Gastrocnemius medialis (tissue), 4 donors: ENCODE measurements at regions of chr20 and their contacts with region 1.

Region 1: DNA sequence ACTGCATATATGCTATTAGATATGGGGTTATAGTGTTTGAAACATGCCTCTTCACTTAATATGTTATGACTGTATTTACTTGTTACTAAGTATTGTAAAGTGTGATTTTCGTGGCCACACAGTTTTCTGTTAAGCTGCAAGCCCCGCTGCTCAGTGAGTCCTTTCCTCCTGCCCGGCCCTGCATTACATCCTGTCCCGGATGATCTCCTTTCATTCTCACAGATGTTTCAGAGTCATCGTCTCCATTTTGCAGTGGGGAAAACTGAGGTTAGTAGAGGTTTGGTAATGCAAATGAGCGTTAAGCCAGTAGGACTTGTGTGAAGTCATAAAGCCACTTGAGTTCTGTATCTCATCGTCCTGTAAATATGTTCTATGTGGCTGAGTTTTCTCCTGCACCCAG is 155.5 kb downstream of the CFAP61 start:
- DNase-seq: no peak
- ATAC-seq: no peak
- H3K4me3 ChIP-seq: no peak overlapping the region
- H3K27ac ChIP-seq: no peak overlapping the region
- H3K4me1 ChIP-seq: peaks cover 45 to 51% of the 10 kb centered on the region in 2 donors
- H3K27me3 ChIP-seq: no peaks in the 10 kb centered on the region
- CTCF ChIP-seq: no peak
- POLR2A ChIP-seq: no peak

Region 2: GRCh38 chr20:18778690-18779392 is 1429.0 kb before region 1 on chr20:
- in situ Hi-C with region 1: no loop called
- intact Hi-C with region 1: no loop called
- DNase-seq: no peak
- ATAC-seq: no peak
- H3K4me3 ChIP-seq: no peak overlapping the region
- H3K27ac ChIP-seq: no peak overlapping the region
- H3K4me1 ChIP-seq: no peaks in the 10 kb centered on the region
- H3K27me3 ChIP-seq: no peaks in the 10 kb centered on the region
- CTCF ChIP-seq: no peak
- POLR2A ChIP-seq: no peak

Region 3: GRCh38 chr20:19913927-19914614 is 293.8 kb before region 1 on chr20:
- in situ Hi-C with region 1: no loop called
- intact Hi-C with region 1: no loop called
- DNase-seq: no peak
- ATAC-seq: no peak
- H3K4me3 ChIP-seq: no peak overlapping the region
- H3K27ac ChIP-seq: peak overlapping the region in 1 of 4 donors; percentile 23
- H3K4me1 ChIP-seq: peaks cover 45 to 55% of the 10 kb centered on the region in 2 donors
- H3K27me3 ChIP-seq: no peaks in the 10 kb centered on the region
- CTCF ChIP-seq: no peak
- POLR2A ChIP-seq: no peak

Region 4: DNA sequence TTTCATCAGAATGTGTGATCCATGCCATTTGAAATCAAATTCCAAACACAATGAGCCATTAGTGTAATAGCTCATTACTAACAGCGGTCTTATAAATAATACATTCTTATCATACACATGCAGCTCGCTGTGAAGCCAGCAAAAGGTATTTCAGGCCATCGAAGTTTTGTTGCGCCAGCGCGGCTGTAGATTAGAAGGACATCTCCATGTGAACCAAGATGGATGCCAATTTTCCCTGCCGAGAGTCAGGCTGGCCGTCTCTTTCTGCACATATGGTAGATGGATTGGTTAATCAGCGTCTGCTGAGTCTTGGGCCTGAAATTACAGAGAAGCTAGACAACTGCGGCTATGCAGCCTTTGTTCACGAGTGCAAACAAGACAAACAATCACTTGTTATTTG is 111.5 kb before region 1 on chr20:
- in situ Hi-C with region 1: no loop called
- intact Hi-C with region 1: no loop called
- DNase-seq: no peak
- ATAC-seq: peak; percentile 31 to 49
- H3K4me3 ChIP-seq: no peak overlapping the region
- H3K27ac ChIP-seq: peak overlapping the region in 3 of 4 donors; percentile 17 to 56 (median 40)
- H3K4me1 ChIP-seq: peaks cover 0 to 8% of the 10 kb centered on the region in 2 donors
- H3K27me3 ChIP-seq: no peaks in the 10 kb centered on the region
- CTCF ChIP-seq: no peak
- POLR2A ChIP-seq: no peak

Region 5: DNA sequence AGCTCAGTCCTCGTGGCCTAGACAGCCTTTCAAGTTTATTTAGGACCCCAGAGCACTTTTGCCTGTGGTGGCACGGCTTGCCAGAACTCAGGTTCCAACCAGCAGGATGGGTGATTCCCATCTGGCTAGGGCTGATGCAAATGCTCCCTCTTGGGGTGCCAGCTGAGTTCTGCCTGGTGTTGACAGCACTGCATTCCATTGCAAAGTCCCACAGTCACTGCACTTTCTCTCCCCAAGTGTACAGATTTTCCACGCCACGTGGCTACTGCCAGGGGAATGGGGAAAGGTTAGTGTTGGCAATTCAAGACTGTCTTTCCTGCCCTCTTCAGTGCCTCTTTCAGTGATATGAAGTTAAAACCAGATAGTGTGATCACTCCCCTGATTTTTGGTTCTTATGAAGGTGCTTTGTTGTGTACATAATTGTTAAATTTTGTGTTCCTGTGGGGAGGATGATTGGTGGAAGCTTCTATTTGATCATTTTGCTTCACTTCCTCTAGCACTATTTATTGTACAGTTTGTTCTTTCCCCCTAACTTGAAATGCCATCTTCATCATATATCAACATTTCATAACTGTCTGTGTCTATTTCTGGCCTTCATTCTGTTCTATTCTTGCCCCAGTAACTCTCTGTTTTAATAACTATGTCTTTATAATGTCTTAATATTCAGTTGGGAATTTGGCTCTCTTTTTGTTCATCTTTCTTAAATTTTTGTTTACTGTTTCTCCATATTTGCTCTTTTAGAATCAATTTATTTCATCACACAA is 69.4 kb before region 1 on chr20:
- in situ Hi-C with region 1: no loop called
- intact Hi-C with region 1: loop called (anchors 2 kb)
- DNase-seq: peak; percentile 38 to 80
- ATAC-seq: peak; percentile 83 to 88
- H3K4me3 ChIP-seq: peak overlapping the region in 3 of 4 donors; percentile 14 to 19 (median 15)
- H3K27ac ChIP-seq: peak overlapping the region; percentile 92 to 97 (median 96)
- H3K4me1 ChIP-seq: peaks cover 32 to 43% of the 10 kb centered on the region in 2 donors
- H3K27me3 ChIP-seq: no peaks in the 10 kb centered on the region
- CTCF ChIP-seq: peak in 1 of 5 experiments; percentile 12
- POLR2A ChIP-seq: peak in 1 of 2 donors; percentile 4

Region 6: DNA sequence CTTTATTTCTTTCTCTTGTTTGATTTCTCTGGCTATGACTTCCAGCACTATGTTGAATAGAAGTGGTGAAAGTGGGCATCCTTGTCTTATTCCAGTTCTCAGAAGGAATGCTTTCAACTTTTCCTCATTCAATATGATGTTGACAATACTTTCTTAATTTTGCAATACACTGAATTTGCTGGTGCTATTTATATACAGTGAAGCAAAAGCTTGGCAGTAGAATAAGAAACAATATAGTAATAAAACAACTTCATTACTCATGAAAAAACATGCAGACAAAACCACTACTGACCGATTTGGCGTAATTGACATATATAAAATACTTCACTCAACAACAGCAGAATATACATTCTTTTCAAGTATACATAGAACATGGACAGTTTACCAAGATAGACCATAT is 59.1 kb before region 1 on chr20:
- in situ Hi-C with region 1: loop called in 1 of 4 experiments (anchors 5 kb)
- intact Hi-C with region 1: no loop called
- DNase-seq: no peak
- ATAC-seq: peak; percentile 63 to 69
- H3K4me3 ChIP-seq: no peak overlapping the region
- H3K27ac ChIP-seq: peak overlapping the region in 3 of 4 donors; percentile 27 to 72 (median 45)
- H3K4me1 ChIP-seq: peaks cover 23 to 31% of the 10 kb centered on the region in 2 donors
- H3K27me3 ChIP-seq: no peaks in the 10 kb centered on the region
- CTCF ChIP-seq: no peak
- POLR2A ChIP-seq: no peak

Region 7: DNA sequence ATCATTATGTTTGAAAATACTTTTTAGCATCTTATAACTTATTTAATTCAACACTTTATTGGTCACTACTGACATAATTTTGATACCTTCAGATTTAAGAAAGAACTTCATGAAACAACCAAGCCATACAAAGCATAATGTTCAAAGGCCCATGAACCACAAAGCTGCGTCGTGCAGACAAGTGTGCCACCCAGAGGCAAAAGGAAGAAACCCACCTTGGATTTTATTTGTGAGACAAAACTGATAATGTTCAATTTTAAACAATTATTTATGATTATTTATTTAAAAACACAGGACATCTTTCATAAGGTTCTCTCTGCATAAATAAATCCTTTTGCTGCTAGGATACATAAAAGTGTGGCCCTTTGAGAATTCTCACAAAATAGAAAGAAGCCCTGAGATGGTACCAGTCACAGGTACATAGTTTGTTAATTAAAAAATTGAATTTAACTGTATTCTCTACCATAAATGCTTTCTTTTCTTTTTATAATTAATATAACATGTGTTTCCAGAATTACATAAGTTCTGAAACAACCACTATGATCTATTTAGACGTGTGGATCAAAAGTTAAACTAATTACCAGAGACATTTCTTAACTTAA is 360.8 kb after region 1 on chr20:
- in situ Hi-C with region 1: no loop called
- intact Hi-C with region 1: no loop called
- DNase-seq: no peak
- ATAC-seq: peak in 1 of 2 donors; percentile 55
- H3K4me3 ChIP-seq: no peak overlapping the region
- H3K27ac ChIP-seq: no peak overlapping the region
- H3K4me1 ChIP-seq: no peaks in the 10 kb centered on the region
- H3K27me3 ChIP-seq: no peaks in the 10 kb centered on the region
- CTCF ChIP-seq: peak; percentile 38 to 63 (median 54)
- POLR2A ChIP-seq: no peak

Region 8: GRCh38 chr20:20702330-20703245 is 494.7 kb after region 1 on chr20:
- in situ Hi-C with region 1: no loop called
- intact Hi-C with region 1: loop called (anchors 10 kb)
- DNase-seq: no peak
- ATAC-seq: no peak
- H3K4me3 ChIP-seq: no peak overlapping the region
- H3K27ac ChIP-seq: peak overlapping the region; percentile 8 to 94 (median 28)
- H3K4me1 ChIP-seq: peaks cover 66 to 82% of the 10 kb centered on the region in 2 donors
- H3K27me3 ChIP-seq: no peaks in the 10 kb centered on the region
- CTCF ChIP-seq: no peak
- POLR2A ChIP-seq: no peak